ENCODE measurements at regions of chr3 and their contacts with region 1.

Region 1: DNA sequence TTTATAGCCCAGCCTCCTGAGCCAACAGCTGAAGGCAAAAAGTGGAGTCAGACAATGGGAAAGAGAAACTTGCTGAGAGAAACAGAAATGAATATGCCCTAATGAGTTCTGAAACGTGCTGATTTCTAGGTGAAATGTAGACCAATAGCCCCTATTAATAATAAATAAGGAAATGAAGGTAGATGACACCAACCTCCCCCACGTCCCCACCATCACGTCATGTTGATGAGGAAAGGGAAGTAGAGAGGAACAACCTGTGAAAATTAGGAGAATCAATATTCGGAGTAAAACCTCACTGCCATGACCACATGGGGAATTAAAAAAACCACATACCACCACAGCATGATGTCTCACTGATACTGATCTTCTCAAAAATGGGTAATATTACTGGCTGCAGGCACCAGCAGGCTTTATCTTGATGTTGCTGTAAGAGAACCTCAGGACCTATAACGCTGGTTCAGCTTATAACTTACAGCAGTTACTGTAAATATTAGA is 64.0 kb downstream of the KAT2B start:
- DNase-seq: peak; percentile 62
- H3K4me3 Mint-ChIP-seq: peak overlapping the region; percentile 57
- H3K27ac Mint-ChIP-seq: peak overlapping the region; percentile 89
- H3K4me1 Mint-ChIP-seq: peaks cover 70% of the 10 kb centered on the region
- H3K27me3 Mint-ChIP-seq: no peaks in the 10 kb centered on the region

Region 2: GRCh38 chr3:19931180-19931692 is 173.0 kb before region 1 on chr3:
- CTCF ChIA-PET with region 1: no interaction called
- POLR2A ChIA-PET with region 1: no interaction called
- intact Hi-C with region 1: loop called (anchors 1 kb)
- DNase-seq: peak; percentile 84
- H3K4me3 Mint-ChIP-seq: peak overlapping the region; percentile 3
- H3K27ac Mint-ChIP-seq: peak overlapping the region; percentile 76
- H3K4me1 Mint-ChIP-seq: peaks cover 33% of the 10 kb centered on the region
- H3K27me3 Mint-ChIP-seq: peaks cover 12% of the 10 kb centered on the region

Region 3: DNA sequence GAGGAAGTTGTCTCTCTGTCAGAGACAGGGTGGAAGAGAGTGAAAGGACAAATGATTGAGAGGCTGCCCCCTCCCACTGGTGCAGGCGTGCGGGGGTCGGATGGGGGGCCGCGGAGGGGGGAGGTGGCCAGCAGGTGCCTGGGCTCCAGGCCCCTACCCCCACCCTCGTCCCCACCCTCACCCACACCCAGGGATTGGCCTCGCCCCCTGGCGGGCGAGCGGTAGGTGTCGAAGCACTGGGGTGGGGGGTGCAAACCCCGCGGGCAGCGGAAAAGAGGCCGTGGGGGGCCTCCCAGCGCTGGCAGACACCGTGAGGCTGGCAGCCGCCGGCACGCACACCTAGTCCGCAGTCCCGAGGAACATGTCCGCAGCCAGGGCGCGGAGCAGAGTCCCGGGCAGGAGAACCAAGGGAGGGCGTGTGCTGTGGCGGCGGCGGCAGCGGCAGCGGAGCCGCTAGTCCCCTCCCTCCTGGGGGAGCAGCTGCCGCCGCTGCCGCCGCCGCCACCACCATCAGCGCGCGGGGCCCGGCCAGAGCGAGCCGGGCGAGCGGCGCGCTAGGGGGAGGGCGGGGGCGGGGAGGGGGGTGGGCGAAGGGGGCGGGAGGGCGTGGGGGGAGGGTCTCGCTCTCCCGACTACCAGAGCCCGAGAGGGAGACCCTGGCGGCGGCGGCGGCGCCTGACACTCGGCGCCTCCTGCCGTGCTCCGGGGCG is 64.3 kb before region 1 on chr3 and contains the start of gene KAT2B:
- CTCF ChIA-PET with region 1: interaction called, 9 read pairs
- POLR2A ChIA-PET with region 1: interaction called, 13 read pairs
- intact Hi-C with region 1: loop called (anchors 1 kb)
- DNase-seq: peak; percentile 91
- H3K4me3 Mint-ChIP-seq: peak within 1 kb of the TSS; percentile 91
- H3K27ac Mint-ChIP-seq: peak within 1 kb of the TSS; percentile 95
- H3K4me1 Mint-ChIP-seq: peaks cover 49% of the 10 kb centered on the region
- H3K27me3 Mint-ChIP-seq: no peaks in the 10 kb centered on the region
- total RNA-seq, gene KAT2B: 43.4 to 49.0 TPM

Region 4: GRCh38 chr3:20060974-20061685 is 43.1 kb before region 1 on chr3:
- CTCF ChIA-PET with region 1: no interaction called
- POLR2A ChIA-PET with region 1: interaction called, 8 read pairs
- intact Hi-C with region 1: loop called (anchors 1 kb)
- DNase-seq: peak; percentile 56
- H3K4me3 Mint-ChIP-seq: no peak overlapping the region
- H3K27ac Mint-ChIP-seq: peak overlapping the region; percentile 72
- H3K4me1 Mint-ChIP-seq: peaks cover 54% of the 10 kb centered on the region
- H3K27me3 Mint-ChIP-seq: no peaks in the 10 kb centered on the region

Region 5: GRCh38 chr3:20185701-20186598 is 81.7 kb after region 1 on chr3 and contains the start of gene SGO1:
- CTCF ChIA-PET with region 1: no interaction called
- POLR2A ChIA-PET with region 1: interaction called, 4 read pairs
- intact Hi-C with region 1: loop called (anchors 1 kb)
- DNase-seq: peak; percentile 100
- H3K4me3 Mint-ChIP-seq: no peak within 1 kb of the TSS
- H3K27ac Mint-ChIP-seq: no peak within 1 kb of the TSS
- H3K4me1 Mint-ChIP-seq: no peaks in the 10 kb centered on the region
- H3K27me3 Mint-ChIP-seq: no peaks in the 10 kb centered on the region
- total RNA-seq, gene SGO1: 37.4 to 37.8 TPM